PC-9 (cell line): ENCODE measurements at regions of chr1 and their contacts with region 1.

Region 1: GRCh38 chr1:198187973-198188588 is 31.3 kb downstream of the NEK7 start:
- DNase-seq: no peak
- H3K4me3 ChIP-seq: no peak overlapping the region
- H3K27ac ChIP-seq: no peak overlapping the region
- H3K4me1 ChIP-seq: 0 out of 2 replicates have a peak, but pooled peaks cover 6% of the 10 kb centered on the region
- H3K27me3 ChIP-seq: no peaks in the 10 kb centered on the region
- CTCF ChIP-seq: no peak

Region 2: DNA sequence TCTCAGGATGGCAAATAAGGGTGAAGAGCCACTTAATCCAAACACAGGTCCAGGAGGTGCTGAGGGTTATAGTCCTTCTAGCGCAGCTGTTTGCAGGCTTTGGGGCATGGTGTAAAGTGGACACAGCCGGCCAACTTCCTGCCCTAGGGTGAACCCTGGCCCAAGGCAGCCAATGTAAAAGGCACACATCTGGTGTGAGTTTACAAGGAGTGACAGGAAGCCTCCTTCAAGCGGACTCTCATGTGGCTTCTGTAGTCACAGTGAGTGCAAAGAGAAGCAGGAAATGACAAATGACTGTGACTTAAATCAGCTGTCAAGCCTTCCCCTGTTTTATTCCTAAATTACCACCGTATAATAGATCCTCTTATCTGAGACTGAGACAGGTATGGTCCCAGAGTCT is 707.0 kb before region 1 on chr1:
- CTCF ChIA-PET with region 1: no interaction called
- POLR2A ChIA-PET with region 1: interaction called, 15 read pairs
- intact Hi-C with region 1: no loop called
- DNase-seq: no peak
- H3K4me3 ChIP-seq: no peak overlapping the region
- H3K27ac ChIP-seq: no peak overlapping the region
- H3K4me1 ChIP-seq: peaks cover 6% of the 10 kb centered on the region
- H3K27me3 ChIP-seq: no peaks in the 10 kb centered on the region
- CTCF ChIP-seq: no peak

Region 3: DNA sequence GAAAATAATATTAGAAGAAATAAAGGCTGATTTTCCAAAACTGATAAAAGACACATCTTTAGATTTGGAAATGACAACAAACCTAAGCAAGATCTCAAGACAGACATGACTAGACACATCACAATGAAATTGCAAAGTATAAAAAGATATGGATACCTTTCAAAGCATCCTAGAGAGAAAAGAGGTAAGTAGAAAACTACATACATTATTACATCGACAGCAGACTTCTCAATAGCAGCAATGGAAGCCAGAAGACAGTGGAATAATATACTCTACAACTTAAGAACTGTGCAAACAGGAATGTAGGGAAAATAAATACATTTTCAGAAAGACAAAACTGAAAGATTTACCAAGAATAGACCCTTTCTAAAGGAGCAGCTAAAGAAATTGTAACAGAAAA is 463.0 kb before region 1 on chr1:
- CTCF ChIA-PET with region 1: no interaction called
- POLR2A ChIA-PET with region 1: no interaction called
- intact Hi-C with region 1: no loop called
- DNase-seq: no peak
- H3K4me3 ChIP-seq: no peak overlapping the region
- H3K27ac ChIP-seq: no peak overlapping the region
- H3K4me1 ChIP-seq: no peaks in the 10 kb centered on the region
- H3K27me3 ChIP-seq: no peaks in the 10 kb centered on the region
- CTCF ChIP-seq: no peak

Region 4: GRCh38 chr1:198244772-198245171 is 56.7 kb after region 1 on chr1:
- CTCF ChIA-PET with region 1: no interaction called
- POLR2A ChIA-PET with region 1: interaction called, 13 read pairs
- intact Hi-C with region 1: no loop called
- DNase-seq: no peak
- H3K4me3 ChIP-seq: no peak overlapping the region
- H3K27ac ChIP-seq: no peak overlapping the region
- H3K4me1 ChIP-seq: no peaks in the 10 kb centered on the region
- H3K27me3 ChIP-seq: no peaks in the 10 kb centered on the region
- CTCF ChIP-seq: no peak

Region 5: GRCh38 chr1:199102239-199102638 is 914.2 kb after region 1 on chr1:
- CTCF ChIA-PET with region 1: no interaction called
- POLR2A ChIA-PET with region 1: no interaction called
- intact Hi-C with region 1: loop called (anchors 10 kb)
- DNase-seq: no peak
- H3K4me3 ChIP-seq: no peak overlapping the region
- H3K27ac ChIP-seq: no peak overlapping the region
- H3K4me1 ChIP-seq: no peaks in the 10 kb centered on the region
- H3K27me3 ChIP-seq: no peaks in the 10 kb centered on the region
- CTCF ChIP-seq: no peak